ENCODE measurements at regions of chr12 and their contacts with region 1.

Region 1: DNA sequence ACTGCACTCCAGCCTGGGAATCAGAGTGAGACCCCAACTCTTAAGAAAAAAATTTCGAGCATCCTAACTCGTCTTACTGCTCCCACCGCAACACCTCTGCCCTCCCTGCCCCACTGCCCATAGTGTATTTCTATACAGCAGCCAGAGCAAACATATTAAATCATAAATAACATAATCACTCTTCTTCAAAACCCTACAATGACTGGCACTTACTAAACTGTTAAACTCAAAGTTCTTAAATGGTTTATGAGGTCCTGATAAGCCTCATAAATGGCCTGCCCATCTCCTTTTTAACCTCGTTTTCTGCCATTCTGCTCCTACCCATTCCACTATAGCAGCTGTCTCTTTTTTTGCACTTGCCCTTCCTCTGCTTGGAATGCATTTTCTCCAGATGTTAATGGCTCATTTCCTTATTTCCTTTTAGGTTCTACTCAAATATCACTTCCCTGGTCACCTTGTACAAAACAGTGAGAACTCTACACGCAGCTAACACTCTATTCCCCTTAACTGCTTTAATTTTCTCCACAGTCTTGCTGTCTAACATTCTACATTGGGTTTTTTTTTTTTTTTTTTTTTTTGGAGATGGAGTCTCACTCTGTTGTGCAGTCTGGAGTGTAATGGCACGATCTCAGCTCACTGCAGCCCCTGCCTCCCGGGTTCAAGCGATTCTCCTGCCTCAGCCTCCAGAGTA is 45.2 kb downstream of the CDK17 start:
- DNase-seq: no peak
- H3K4me3 ChIP-seq: no peak overlapping the region
- H3K27ac ChIP-seq: no peak overlapping the region
- H3K4me1 ChIP-seq: peaks cover 62% of the 10 kb centered on the region
- H3K27me3 ChIP-seq: no peaks in the 10 kb centered on the region
- CTCF ChIP-seq: no peak
- POLR2A ChIP-seq: peak; percentile 23

Region 2: DNA sequence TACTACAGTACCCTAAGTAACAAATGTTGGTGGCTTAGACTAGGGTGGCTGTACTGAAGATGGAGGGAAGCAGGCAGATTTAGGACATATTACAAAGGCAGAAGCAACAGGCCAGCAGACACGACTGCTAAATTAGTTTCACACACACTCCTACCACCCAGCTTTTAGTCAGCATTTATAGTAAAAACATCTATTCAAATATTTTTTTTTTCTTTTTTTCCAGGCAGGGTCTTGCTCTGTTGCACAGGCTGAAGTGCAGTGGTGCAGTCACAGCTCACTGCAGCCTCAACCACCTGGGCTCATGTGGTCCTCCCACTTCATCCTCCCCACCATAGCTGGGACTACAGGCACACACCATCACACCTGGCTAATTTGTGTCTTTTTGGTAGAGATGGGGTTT is 27.6 kb before region 1 on chr12:
- CTCF ChIA-PET with region 1: no interaction called
- POLR2A ChIA-PET with region 1: no interaction called
- dilution Hi-C with region 1: no loop called
- intact Hi-C with region 1: no loop called
- DNase-seq: no peak
- H3K4me3 ChIP-seq: no peak overlapping the region
- H3K27ac ChIP-seq: no peak overlapping the region
- H3K4me1 ChIP-seq: no peaks in the 10 kb centered on the region
- H3K27me3 ChIP-seq: no peaks in the 10 kb centered on the region
- CTCF ChIP-seq: no peak
- POLR2A ChIP-seq: no peak

Region 3: GRCh38 chr12:96375841-96376604 is 21.0 kb after region 1 on chr12:
- CTCF ChIA-PET with region 1: interaction called, 5 read pairs
- POLR2A ChIA-PET with region 1: interaction called, 12 read pairs
- dilution Hi-C with region 1: no loop called
- intact Hi-C with region 1: no loop called
- DNase-seq: peak; percentile 89
- H3K4me3 ChIP-seq: no peak overlapping the region
- H3K27ac ChIP-seq: peak overlapping the region; percentile 69
- H3K4me1 ChIP-seq: peaks cover 86% of the 10 kb centered on the region
- H3K27me3 ChIP-seq: no peaks in the 10 kb centered on the region
- CTCF ChIP-seq: no peak
- POLR2A ChIP-seq: peak; percentile 58

Region 4: GRCh38 chr12:96445691-96446583 is 90.9 kb after region 1 on chr12:
- CTCF ChIA-PET with region 1: no interaction called
- POLR2A ChIA-PET with region 1: no interaction called
- dilution Hi-C with region 1: no loop called
- intact Hi-C with region 1: no loop called
- DNase-seq: peak; percentile 100
- H3K4me3 ChIP-seq: no peak overlapping the region
- H3K27ac ChIP-seq: peak overlapping the region; percentile 99
- H3K4me1 ChIP-seq: peaks cover 51% of the 10 kb centered on the region
- H3K27me3 ChIP-seq: no peaks in the 10 kb centered on the region
- CTCF ChIP-seq: no peak
- POLR2A ChIP-seq: peak; percentile 88

Region 5: GRCh38 chr12:96670334-96670899 is 315.4 kb after region 1 on chr12:
- CTCF ChIA-PET with region 1: no interaction called
- POLR2A ChIA-PET with region 1: no interaction called
- dilution Hi-C with region 1: no loop called
- intact Hi-C with region 1: no loop called
- DNase-seq: no peak
- H3K4me3 ChIP-seq: no peak overlapping the region
- H3K27ac ChIP-seq: no peak overlapping the region
- H3K4me1 ChIP-seq: no peaks in the 10 kb centered on the region
- H3K27me3 ChIP-seq: no peaks in the 10 kb centered on the region
- CTCF ChIP-seq: no peak
- POLR2A ChIP-seq: no peak